ENCODE measurements at regions of chr18 and their contacts with region 1.

Region 1: DNA sequence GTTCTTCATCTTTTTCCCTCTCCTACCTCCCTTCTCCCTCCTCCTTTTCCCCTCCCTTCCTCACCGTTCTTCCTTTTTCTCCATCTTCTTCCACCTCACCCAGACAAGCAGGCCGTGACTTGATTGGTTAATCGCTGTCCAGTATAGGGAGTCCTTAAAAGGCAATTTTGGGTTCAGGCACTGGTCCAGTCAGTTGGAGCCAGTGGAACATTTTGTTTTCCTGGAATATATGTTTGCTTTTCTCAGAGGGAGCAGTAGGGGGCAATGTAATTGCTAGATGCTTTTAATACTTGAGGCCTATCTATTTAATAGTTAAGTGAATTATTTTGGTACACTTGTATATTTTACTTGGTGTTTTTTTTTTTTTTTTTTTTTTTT is 15.0 kb downstream of the ELAC1 start:
- DNase-seq: no peak
- H3K4me3 ChIP-seq: no peak overlapping the region
- H3K27ac ChIP-seq: peak overlapping the region; percentile 60 to 64
- H3K4me1 ChIP-seq: no peaks in the 10 kb centered on the region
- H3K27me3 ChIP-seq: no peaks in the 10 kb centered on the region
- CTCF ChIP-seq: no peak
- POLR2A ChIP-seq: no peak

Region 2: GRCh38 chr18:50602525-50602924 is 380.3 kb before region 1 on chr18:
- intact Hi-C with region 1: no loop called
- DNase-seq: no peak
- H3K4me3 ChIP-seq: no peak overlapping the region
- H3K27ac ChIP-seq: no peak overlapping the region
- H3K4me1 ChIP-seq: no peaks in the 10 kb centered on the region
- H3K27me3 ChIP-seq: peaks cover 0 to 3% of the 10 kb centered on the region in 2 donors
- CTCF ChIP-seq: no peak
- POLR2A ChIP-seq: no peak

Region 3: GRCh38 chr18:50734342-50734741 is 248.4 kb before region 1 on chr18:
- intact Hi-C with region 1: loop called (anchors 5 kb)
- DNase-seq: no peak
- H3K4me3 ChIP-seq: no peak overlapping the region
- H3K27ac ChIP-seq: no peak overlapping the region
- H3K4me1 ChIP-seq: no peaks in the 10 kb centered on the region
- H3K27me3 ChIP-seq: no peaks in the 10 kb centered on the region
- CTCF ChIP-seq: no peak
- POLR2A ChIP-seq: no peak

Measured in breast epithelium (tissue), 4 donors.